Activated B cell treated with CpG ODN at 0.5 μM for 24 hours (primary cell): ENCODE measurements at regions of chr12 and their contacts with region 1.

Region 1: GRCh38 chr12:31728917-31729640 is at the start of gene AMN1:
- DNase-seq: peak; percentile 100
- ATAC-seq: peak; percentile 90
- H3K4me3 Mint-ChIP-seq: peak within 1 kb of the TSS; percentile 92
- H3K27ac Mint-ChIP-seq: peak within 1 kb of the TSS; percentile 98
- H3K4me1 Mint-ChIP-seq: peaks cover 74% of the 10 kb centered on the region
- H3K27me3 Mint-ChIP-seq: no peaks in the 10 kb centered on the region
- CTCF ChIP-seq: no peak
- total RNA-seq, gene AMN1: 13.7 and 15.5 TPM in 2 replicates

Region 2: GRCh38 chr12:31288381-31288780 is 440.7 kb before region 1 on chr12:
- CTCF ChIA-PET with region 1: no interaction called
- POLR2A ChIA-PET with region 1: no interaction called
- intact Hi-C with region 1: no loop called
- DNase-seq: no peak
- ATAC-seq: no peak
- H3K4me3 Mint-ChIP-seq: no peak overlapping the region
- H3K27ac Mint-ChIP-seq: no peak overlapping the region
- H3K4me1 Mint-ChIP-seq: no peaks in the 10 kb centered on the region
- H3K27me3 Mint-ChIP-seq: no peaks in the 10 kb centered on the region
- CTCF ChIP-seq: no peak

Region 3: GRCh38 chr12:31715283-31715825 is 13.7 kb before region 1 on chr12:
- CTCF ChIA-PET with region 1: interaction called, 4 read pairs
- POLR2A ChIA-PET with region 1: interaction called, 101 read pairs
- intact Hi-C with region 1: loop called (anchors 1 kb)
- DNase-seq: no peak
- ATAC-seq: peak; percentile 93
- H3K4me3 Mint-ChIP-seq: peak overlapping the region; percentile 32
- H3K27ac Mint-ChIP-seq: peak overlapping the region; percentile 85
- H3K4me1 Mint-ChIP-seq: peaks cover 58% of the 10 kb centered on the region
- H3K27me3 Mint-ChIP-seq: no peaks in the 10 kb centered on the region
- CTCF ChIP-seq: no peak

Region 4: DNA sequence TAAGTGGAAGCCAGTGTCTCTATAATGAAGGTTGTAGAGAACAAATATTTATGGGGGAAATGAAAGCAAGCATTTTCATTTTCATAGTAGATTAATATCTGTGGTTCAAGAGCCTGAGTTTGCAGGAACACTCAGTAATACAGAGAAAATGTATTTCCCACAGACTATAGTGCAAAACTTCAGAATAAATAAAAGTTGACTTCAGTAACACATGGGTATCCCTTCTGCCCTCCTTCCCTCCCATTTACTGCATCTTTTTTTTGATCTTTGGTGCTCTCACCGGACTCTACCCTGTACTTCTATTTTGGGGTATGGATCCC is 75.1 kb after region 1 on chr12:
- CTCF ChIA-PET with region 1: interaction called, 3 read pairs
- POLR2A ChIA-PET with region 1: interaction called, 55 read pairs
- intact Hi-C with region 1: loop called (anchors 1 kb)
- DNase-seq: no peak
- ATAC-seq: no peak
- H3K4me3 Mint-ChIP-seq: peak overlapping the region; percentile 78
- H3K27ac Mint-ChIP-seq: peak overlapping the region; percentile 88
- H3K4me1 Mint-ChIP-seq: peaks cover 50% of the 10 kb centered on the region
- H3K27me3 Mint-ChIP-seq: no peaks in the 10 kb centered on the region
- CTCF ChIP-seq: no peak

Region 5: GRCh38 chr12:31868965-31869364 is 139.9 kb after region 1 on chr12:
- CTCF ChIA-PET with region 1: no interaction called
- POLR2A ChIA-PET with region 1: interaction called, 19 read pairs
- intact Hi-C with region 1: no loop called
- DNase-seq: no peak
- ATAC-seq: no peak
- H3K4me3 Mint-ChIP-seq: no peak overlapping the region
- H3K27ac Mint-ChIP-seq: peak overlapping the region; percentile 75
- H3K4me1 Mint-ChIP-seq: peaks cover 58% of the 10 kb centered on the region
- H3K27me3 Mint-ChIP-seq: no peaks in the 10 kb centered on the region
- CTCF ChIP-seq: no peak

Region 6: DNA sequence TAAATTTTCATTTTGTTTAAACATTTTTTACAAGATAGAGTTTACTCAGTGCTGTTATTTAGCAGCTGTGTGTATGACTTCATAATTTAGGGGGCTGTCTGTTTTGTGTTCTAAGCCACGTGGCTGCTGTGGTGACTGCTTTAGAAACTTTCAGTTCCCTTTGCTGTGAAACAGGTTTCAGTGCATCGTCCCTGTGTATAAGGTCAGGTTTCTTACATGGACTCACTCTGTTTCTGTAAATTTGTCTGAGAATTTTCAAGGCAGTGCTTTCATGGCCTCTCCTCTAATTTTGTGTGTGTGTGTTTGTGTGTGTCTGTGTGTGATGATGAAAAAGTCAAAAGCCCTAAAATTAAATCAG is 410.0 kb after region 1 on chr12:
- CTCF ChIA-PET with region 1: no interaction called
- POLR2A ChIA-PET with region 1: no interaction called
- intact Hi-C with region 1: loop called (anchors 10 kb)
- DNase-seq: peak; percentile 27
- ATAC-seq: peak; percentile 83
- H3K4me3 Mint-ChIP-seq: peak overlapping the region; percentile 79
- H3K27ac Mint-ChIP-seq: peak overlapping the region; percentile 96
- H3K4me1 Mint-ChIP-seq: peaks cover 74% of the 10 kb centered on the region
- H3K27me3 Mint-ChIP-seq: no peaks in the 10 kb centered on the region
- CTCF ChIP-seq: no peak